BJ (cell line): ENCODE measurements at regions of chr17 and their contacts with region 1.

Region 1: GRCh38 chr17:80101011-80101945 is at the start of gene GAA:
- DNase-seq: no peak
- H3K4me3 ChIP-seq: peak within 1 kb of the TSS; percentile 81
- H3K27me3 ChIP-seq: no peaks in the 10 kb centered on the region
- CTCF ChIP-seq: peak; percentile 38
- polyA plus RNA-seq, gene GAA: 3.3 and 5.7 TPM in 2 replicates

Region 2: GRCh38 chr17:79915850-79916430 is 185.3 kb before region 1 on chr17:
- CTCF ChIA-PET with region 1: no interaction called
- POLR2A ChIA-PET with region 1: no interaction called
- DNase-seq: no peak
- H3K4me3 ChIP-seq: no peak overlapping the region
- H3K27me3 ChIP-seq: peaks cover 6% of the 10 kb centered on the region
- CTCF ChIP-seq: peak; percentile 39

Region 3: DNA sequence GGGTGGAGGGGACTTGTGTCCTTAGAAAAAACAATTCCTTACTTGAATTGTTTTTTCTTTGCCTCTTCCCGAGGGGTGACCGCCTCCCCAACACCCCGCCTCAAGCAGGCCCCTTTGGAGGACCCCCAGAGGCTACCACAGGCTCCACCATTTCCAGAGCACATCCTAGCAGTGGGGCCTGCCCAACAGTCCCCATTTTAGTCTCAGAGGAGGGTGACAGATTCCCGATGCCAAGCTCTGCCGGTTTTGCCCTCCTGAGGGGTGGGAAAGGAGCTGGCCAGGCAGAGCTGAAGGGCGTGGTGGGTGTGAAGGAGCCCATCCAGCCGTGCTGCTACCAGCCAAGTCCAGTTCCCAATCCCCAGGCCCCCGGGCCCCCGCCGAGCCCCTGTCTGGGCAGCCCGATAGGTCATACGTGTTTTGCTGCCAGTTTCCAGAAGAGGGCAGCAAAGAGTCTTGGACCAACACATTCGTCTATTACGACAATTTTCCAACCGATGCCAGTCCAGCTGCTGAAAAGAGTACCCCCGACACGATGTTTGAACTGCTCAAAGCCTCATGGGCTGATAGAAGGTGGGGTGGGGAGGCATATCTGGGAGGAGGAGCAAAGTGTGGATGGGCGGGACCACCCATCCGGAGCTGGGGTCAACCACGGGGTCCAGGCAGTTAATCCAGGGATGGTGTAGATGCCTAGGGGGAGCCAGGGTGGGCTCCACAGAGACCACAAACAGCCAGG is 18.7 kb before region 1 on chr17:
- CTCF ChIA-PET with region 1: interaction called, 42 read pairs
- POLR2A ChIA-PET with region 1: no interaction called
- DNase-seq: no peak
- H3K4me3 ChIP-seq: no peak overlapping the region
- H3K27me3 ChIP-seq: peaks cover 2% of the 10 kb centered on the region
- CTCF ChIP-seq: peak; percentile 86

Region 4: DNA sequence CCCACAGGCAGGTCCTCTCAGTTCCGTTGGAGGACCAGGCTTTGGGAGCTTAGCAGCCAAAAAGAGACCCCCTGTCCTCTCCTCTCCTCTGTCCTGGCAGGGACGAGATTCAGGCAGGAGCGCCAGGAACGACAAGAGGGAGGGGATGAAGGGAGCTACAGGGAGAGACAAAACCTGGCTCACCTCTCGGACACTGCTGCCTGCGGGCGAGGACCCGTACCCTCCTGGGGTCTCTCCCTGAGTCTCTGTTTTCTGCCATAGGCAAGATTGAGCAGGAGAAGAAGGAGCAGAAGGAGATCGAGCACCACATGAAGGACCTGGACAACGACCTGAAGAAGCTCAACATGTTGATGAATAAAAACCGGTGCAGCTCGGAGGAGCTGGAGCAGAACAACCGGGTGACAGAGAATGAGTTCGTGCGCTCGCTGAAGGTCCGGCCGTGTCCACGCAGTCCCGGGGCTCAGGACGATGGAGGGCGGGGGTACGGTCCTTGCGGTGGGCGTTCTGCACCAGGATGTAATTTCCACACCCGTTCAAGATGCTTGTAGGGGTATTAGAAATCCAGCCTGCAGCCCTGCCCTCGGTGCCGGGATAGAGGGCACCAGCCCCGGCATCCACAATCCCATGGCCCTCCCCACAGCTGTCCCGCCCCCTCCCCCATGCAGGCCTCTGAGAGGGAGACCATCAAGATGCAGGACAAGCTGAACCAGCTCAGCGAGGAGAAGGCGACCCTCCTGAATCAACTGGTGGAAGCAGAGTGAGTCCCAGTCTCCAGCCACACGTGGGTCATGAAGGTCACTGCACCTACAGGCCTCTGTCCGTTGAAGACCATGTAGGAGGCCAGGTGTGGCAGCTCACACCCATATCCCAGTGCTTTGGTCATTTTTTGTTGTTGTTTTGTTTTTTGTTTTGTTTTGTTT is 13.7 kb before region 1 on chr17:
- CTCF ChIA-PET with region 1: interaction called, 42 read pairs
- POLR2A ChIA-PET with region 1: no interaction called
- DNase-seq: no peak
- H3K4me3 ChIP-seq: no peak overlapping the region
- H3K27me3 ChIP-seq: peaks cover 2% of the 10 kb centered on the region
- CTCF ChIP-seq: no peak

Region 5: GRCh38 chr17:80129003-80129565 is 27.8 kb after region 1 on chr17:
- CTCF ChIA-PET with region 1: interaction called, 11 read pairs
- POLR2A ChIA-PET with region 1: no interaction called
- DNase-seq: no peak
- H3K4me3 ChIP-seq: no peak overlapping the region
- H3K27me3 ChIP-seq: 0 out of 2 replicates have a peak, but pooled peaks cover 2% of the 10 kb centered on the region
- CTCF ChIP-seq: no peak

Region 6: DNA sequence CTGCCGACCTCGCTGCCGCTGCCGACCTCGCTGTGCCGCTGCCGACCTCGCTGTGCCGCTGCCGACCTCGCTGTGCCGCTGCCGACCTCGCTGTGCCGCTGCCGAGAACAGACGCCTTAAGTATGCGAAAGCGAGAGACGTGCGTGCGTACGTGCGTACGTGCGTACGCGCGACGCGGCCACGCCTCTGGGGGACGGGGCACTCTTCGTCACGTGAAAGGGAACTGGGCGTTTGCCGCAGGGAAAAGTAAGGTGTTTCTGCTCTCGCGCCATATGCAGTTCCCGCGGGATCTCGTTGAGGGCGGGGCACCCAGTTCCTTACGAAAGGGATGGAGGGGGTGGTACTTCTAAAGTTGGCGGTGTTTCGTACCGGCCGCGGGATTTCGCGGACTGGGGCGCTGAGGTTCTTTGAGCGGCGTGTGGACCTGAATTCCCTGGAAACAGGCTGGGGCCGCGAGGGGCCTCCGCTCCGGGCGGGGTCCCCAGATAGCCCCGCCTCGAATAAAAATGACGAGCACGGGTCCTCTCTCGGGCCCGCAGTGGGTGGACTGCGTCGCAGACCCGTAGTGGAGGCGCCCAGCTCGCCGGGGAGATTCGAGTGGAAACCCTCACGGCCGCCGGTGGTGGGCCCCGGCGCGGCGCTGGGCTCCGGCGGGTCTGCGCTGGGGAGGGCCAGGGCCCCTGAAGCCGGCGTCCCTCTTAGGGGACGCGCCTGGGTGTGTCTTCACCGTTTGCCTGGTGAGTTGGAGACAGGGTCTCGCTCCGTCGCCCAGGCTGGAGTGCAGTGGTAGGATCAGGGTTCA is 46.0 kb after region 1 on chr17 and contains the start of gene EIF4A3:
- CTCF ChIA-PET with region 1: interaction called, 18 read pairs
- POLR2A ChIA-PET with region 1: no interaction called
- DNase-seq: peak; percentile 98
- H3K4me3 ChIP-seq: peak within 1 kb of the TSS; percentile 68
- H3K27me3 ChIP-seq: no peaks in the 10 kb centered on the region
- CTCF ChIP-seq: 0 out of 2 replicates have a peak, but pooled peaks have one; percentile 1
- polyA plus RNA-seq, gene EIF4A3: 89.0 and 89.4 TPM in 2 replicates

Region 7: GRCh38 chr17:80252607-80253289 is 151.5 kb after region 1 on chr17:
- CTCF ChIA-PET with region 1: no interaction called
- POLR2A ChIA-PET with region 1: no interaction called
- DNase-seq: no peak
- H3K4me3 ChIP-seq: no peak overlapping the region
- H3K27me3 ChIP-seq: no peaks in the 10 kb centered on the region
- CTCF ChIP-seq: peak; percentile 43

Region 8: DNA sequence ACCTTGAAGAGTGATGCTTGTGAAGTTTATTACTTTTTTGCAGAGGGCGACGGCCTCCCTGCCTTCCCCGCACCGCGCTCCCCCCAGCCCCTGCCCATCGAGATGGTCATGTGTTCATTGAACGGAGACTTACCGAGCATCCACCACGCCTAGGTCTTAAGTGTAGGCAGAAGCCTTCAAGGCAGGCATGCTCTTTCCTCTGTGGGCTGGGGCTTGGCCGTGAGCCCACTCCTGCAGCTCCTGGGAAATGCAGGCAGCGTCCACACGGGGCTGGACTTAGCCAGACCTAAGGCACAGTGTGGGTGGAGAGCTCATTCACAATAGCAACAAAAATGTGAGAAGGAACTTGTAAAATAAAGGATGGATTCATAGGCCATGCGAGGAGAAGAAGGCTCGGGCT is 178.6 kb after region 1 on chr17:
- CTCF ChIA-PET with region 1: interaction called, 11 read pairs
- POLR2A ChIA-PET with region 1: no interaction called
- DNase-seq: peak; percentile 79
- H3K4me3 ChIP-seq: no peak overlapping the region
- H3K27me3 ChIP-seq: no peaks in the 10 kb centered on the region
- CTCF ChIP-seq: peak; percentile 37